Activated CD8-positive, alpha-beta T cell treated with anti-CD3 and anti-CD28 coated beads for 36 hours (primary cell): ENCODE measurements at regions of chr1 and their contacts with region 1.

Region 1: GRCh38 chr1:18902523-18903290 is at the start of gene ALDH4A1:
- DNase-seq: peak; percentile 96
- ATAC-seq: peak; percentile 98
- H3K4me3 Mint-ChIP-seq: peak within 1 kb of the TSS; percentile 87
- H3K27ac Mint-ChIP-seq: peak within 1 kb of the TSS; percentile 98
- H3K4me1 Mint-ChIP-seq: peaks cover 22% of the 10 kb centered on the region
- H3K27me3 Mint-ChIP-seq: no peaks in the 10 kb centered on the region
- CTCF ChIP-seq: no peak
- total RNA-seq, gene ALDH4A1: 3.9 to 4.3 TPM

Region 2: GRCh38 chr1:18751425-18751824 is 151.3 kb before region 1 on chr1:
- CTCF ChIA-PET with region 1: no interaction called
- POLR2A ChIA-PET with region 1: no interaction called
- intact Hi-C with region 1: no loop called
- DNase-seq: no peak
- ATAC-seq: no peak
- H3K4me3 Mint-ChIP-seq: no peak overlapping the region
- H3K27ac Mint-ChIP-seq: no peak overlapping the region
- H3K4me1 Mint-ChIP-seq: no peaks in the 10 kb centered on the region
- H3K27me3 Mint-ChIP-seq: peaks cover 23% of the 10 kb centered on the region
- CTCF ChIP-seq: no peak

Region 3: DNA sequence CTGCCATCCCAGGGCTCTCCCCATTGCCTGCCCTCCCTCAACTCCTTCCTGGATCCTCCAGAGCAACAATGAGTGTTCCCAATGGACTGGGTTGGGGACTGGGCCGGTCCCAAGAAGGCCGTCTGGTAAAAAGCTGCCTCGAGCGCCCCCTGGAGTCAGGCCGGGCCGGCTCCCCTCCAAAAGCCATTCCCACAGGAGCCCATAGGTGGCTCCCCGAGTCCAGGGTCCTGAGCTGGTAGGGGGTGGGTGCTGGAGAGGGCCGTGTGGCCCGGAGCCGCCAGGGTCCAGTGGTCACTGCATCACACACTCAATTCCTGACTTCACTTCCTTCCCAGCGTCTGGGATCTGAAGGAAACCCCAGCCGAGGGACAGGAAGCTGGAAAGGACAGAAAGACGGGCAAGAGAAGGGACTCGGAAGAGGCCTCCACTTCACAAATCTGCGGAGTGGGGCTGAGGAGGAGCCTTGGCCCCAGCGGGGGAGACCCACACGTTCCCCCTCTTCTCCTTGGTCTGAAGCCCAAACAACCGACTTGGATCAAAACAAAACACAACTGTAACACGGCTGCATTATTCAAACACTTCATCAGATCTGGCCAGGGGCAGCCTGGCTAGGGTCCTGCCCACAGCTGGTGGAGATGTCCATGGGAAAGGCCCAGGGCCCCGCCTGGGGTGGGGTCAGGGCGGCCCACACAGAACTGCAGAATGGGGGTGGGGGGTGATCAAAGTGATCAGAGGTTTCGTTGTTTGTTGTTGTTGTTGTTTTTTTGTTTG is 10.5 kb after region 1 on chr1:
- CTCF ChIA-PET with region 1: interaction called, 35 read pairs
- POLR2A ChIA-PET with region 1: interaction called, 6 read pairs
- intact Hi-C with region 1: no loop called
- DNase-seq: peak; percentile 83
- ATAC-seq: peak; percentile 92
- H3K4me3 Mint-ChIP-seq: no peak overlapping the region
- H3K27ac Mint-ChIP-seq: peak overlapping the region; percentile 76
- H3K4me1 Mint-ChIP-seq: peaks cover 23% of the 10 kb centered on the region
- H3K27me3 Mint-ChIP-seq: no peaks in the 10 kb centered on the region
- CTCF ChIP-seq: peak; percentile 98

Region 4: DNA sequence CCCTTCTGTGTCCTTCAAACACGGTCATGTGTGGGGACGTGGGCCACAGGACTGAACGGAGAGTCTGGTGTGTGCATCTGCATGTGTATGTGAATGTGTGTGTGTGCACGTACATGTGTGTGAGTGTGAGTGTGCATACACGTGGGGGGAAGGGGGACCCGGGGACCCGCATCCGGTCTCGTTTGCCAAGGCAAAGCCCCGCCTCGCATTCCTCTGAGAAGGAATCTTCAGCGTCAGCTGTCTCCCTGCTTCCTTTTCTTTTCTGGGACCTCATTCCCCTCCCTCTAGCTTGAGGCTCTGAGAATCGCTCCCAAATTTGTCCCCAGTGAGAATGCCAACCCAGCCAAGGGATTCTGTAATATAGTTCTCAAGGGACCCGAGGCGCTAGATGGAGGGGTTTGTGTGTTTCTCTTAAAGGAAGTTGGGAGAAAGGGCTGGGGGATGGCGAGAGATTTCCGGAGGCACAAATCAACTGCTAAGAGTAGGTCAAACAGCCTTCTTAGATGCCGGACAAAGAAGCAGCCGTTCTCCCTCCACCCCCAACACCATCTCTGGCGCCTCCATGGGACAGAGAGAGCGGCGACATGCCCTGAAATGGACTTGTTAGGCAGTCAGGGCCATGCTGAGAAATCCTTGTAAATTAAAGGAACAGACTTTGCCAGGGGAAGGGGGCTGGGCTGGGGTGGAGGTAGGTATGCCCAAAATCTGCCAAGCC is 47.1 kb after region 1 on chr1:
- CTCF ChIA-PET with region 1: interaction called, 33 read pairs
- POLR2A ChIA-PET with region 1: interaction called, 7 read pairs
- intact Hi-C with region 1: loop called (anchors 5 kb)
- DNase-seq: peak; percentile 42
- ATAC-seq: no peak
- H3K4me3 Mint-ChIP-seq: peak overlapping the region; percentile 82
- H3K27ac Mint-ChIP-seq: peak overlapping the region; percentile 93
- H3K4me1 Mint-ChIP-seq: peaks cover 95% of the 10 kb centered on the region
- H3K27me3 Mint-ChIP-seq: no peaks in the 10 kb centered on the region
- CTCF ChIP-seq: peak; percentile 20

Region 5: GRCh38 chr1:18972531-18972930 is 69.8 kb after region 1 on chr1:
- CTCF ChIA-PET with region 1: interaction called, 23 read pairs
- POLR2A ChIA-PET with region 1: interaction called, 3 read pairs
- intact Hi-C with region 1: no loop called
- DNase-seq: peak; percentile 35
- ATAC-seq: peak; percentile 55
- H3K4me3 Mint-ChIP-seq: no peak overlapping the region
- H3K27ac Mint-ChIP-seq: no peak overlapping the region
- H3K4me1 Mint-ChIP-seq: peaks cover 11% of the 10 kb centered on the region
- H3K27me3 Mint-ChIP-seq: no peaks in the 10 kb centered on the region
- CTCF ChIP-seq: no peak

Region 6: GRCh38 chr1:19042675-19043578 is 140.2 kb after region 1 on chr1:
- CTCF ChIA-PET with region 1: interaction called, 12 read pairs
- POLR2A ChIA-PET with region 1: interaction called, 3 read pairs
- intact Hi-C with region 1: no loop called
- DNase-seq: peak; percentile 62
- ATAC-seq: peak; percentile 40
- H3K4me3 Mint-ChIP-seq: no peak overlapping the region
- H3K27ac Mint-ChIP-seq: no peak overlapping the region
- H3K4me1 Mint-ChIP-seq: peaks cover 14% of the 10 kb centered on the region
- H3K27me3 Mint-ChIP-seq: peaks cover 10% of the 10 kb centered on the region
- CTCF ChIP-seq: no peak

Region 7: DNA sequence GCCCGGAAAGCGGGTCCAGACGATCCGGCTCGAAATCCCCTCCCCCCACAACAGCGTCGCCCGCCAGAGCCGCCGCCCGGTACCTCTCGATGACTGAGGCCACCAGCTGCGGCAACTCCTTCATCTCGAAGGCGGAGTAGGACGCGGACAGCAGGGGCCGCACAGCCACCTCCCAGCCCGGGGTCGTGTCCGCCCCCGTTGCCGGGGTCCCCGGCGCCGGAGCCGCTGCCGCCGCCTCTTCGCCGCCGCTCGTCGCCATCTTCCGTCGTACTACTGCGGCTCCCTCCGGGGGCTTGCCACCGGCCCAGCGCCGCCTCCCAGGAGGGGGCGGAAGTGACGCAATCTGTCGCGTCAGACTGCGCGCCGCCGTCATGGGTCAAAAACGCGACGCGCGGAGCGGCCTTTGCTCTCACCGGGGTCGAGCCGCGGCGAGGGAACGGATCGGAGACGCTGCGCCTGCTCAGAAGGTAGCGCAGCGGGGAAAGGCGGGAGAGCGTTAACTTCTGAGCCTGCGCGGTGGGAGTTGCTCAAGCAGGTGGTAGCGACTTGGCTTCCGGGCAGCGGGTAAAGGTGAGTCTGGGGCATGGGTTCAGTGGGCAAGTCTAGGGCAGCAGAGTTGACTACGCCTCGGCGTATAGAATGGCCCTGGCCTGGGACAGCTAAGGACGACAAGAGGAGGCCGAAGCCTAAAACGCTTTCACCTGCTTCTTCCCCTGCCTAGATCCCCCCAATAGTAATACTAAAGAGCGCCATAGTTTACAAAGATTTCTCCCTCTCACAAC is 307.5 kb after region 1 on chr1 and contains the start of gene UBR4:
- CTCF ChIA-PET with region 1: no interaction called
- POLR2A ChIA-PET with region 1: no interaction called
- intact Hi-C with region 1: no loop called
- DNase-seq: peak; percentile 97
- ATAC-seq: peak; percentile 88
- H3K4me3 Mint-ChIP-seq: peak within 1 kb of the TSS; percentile 93
- H3K27ac Mint-ChIP-seq: peak within 1 kb of the TSS; percentile 98
- H3K4me1 Mint-ChIP-seq: peaks cover 61% of the 10 kb centered on the region
- H3K27me3 Mint-ChIP-seq: no peaks in the 10 kb centered on the region
- CTCF ChIP-seq: no peak
- total RNA-seq, gene UBR4: 133 TPM